ENCODE measurements at regions of chr6 and their contacts with region 1.

Region 1: GRCh38 chr6:33271458-33272274 is at the starts of genes RPS18 and VPS52:
- DNase-seq: peak; percentile 96
- total RNA-seq, gene RPS18: 753 TPM
- total RNA-seq, gene VPS52: 32.5 TPM

Region 2: GRCh38 chr6:33132081-33132524 is 139.6 kb before region 1 on chr6:
- intact Hi-C with region 1: no loop called
- DNase-seq: no peak

Region 3: DNA sequence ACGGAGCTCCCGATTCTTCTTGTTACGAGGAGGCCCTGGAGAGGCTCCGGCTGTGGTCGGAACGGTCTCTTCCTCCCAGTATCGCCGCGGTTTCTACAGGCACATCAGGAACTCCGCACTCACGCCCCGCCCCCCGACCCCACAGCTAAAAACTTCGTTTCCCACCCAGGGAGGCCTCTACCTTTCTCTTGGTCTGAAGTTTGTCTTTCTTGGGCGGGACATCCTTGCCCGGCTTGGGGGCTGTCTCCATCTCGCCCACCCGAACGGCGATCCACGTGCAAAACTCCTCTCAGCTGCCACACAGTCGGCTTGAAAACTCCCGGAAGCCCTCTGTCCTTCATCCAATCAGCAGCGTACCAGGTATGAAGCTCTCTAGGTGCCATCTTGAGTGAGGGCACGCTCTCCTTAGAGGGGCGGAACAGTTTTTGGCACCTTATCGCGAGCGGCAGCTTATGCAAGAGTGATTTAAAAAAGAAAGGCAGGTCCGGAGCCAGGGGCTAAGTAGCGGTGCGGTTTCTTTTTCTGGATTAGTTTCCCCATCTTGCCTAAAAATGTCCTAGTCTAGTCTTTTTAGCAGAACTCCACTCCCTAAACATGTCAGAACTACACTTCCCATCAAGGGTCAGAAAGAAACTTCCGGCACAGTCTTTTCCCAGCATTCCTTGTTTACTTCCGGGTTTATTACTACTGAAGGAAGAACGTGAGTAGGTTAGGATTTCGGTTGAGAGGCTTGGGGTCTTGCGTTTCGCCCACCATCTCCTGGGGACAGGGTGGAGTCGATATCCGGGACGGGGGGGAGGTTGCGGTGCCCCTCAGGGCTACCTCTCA is 17.5 kb after region 1 on chr6 and contains the starts of genes PFDN6 and WDR46:
- intact Hi-C with region 1: loop called (anchors 1 kb)
- DNase-seq: peak; percentile 92
- total RNA-seq, gene PFDN6: 35.1 TPM
- total RNA-seq, gene WDR46: 18.8 TPM

Measured in cardiac septum (tissue), 1 donor.